ENCODE measurements at regions of chr6 and their contacts with region 1.

Region 1: DNA sequence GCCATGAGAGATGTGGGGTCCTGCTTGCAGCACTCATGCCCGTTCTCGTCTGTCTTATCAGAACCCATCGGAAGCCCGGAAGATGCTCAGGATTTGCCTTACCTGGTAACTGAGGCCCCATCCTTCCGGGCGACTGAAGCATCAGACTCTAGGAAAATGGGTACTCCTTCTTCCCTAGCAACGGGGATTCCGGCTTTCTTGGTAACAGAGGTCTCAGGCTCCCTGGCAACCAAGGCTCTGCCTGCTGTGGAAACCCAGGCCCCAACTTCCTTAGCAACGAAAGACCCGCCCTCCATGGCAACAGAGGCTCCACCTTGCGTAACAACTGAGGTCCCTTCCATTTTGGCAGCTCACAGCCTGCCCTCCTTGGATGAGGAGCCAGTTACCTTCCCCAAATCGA is 8.3 kb downstream of the PI16 start:
- DNase-seq: peak; percentile 66 to 95
- H3K4me3 ChIP-seq: no peak overlapping the region
- H3K27ac ChIP-seq: no peak overlapping the region
- H3K4me1 ChIP-seq: peaks cover 0 to 8% (median 5%) of the 10 kb centered on the region in 4 experiments; a peak in 5 of 7 replicates
- H3K27me3 ChIP-seq: no peaks in the 10 kb centered on the region
- CTCF ChIP-seq: no peak
- EP300 ChIP-seq: no peak
- POLR2A ChIP-seq: no peak
- RAD21 ChIP-seq: no peak; a peak in 1 of 4 replicates

Region 2: DNA sequence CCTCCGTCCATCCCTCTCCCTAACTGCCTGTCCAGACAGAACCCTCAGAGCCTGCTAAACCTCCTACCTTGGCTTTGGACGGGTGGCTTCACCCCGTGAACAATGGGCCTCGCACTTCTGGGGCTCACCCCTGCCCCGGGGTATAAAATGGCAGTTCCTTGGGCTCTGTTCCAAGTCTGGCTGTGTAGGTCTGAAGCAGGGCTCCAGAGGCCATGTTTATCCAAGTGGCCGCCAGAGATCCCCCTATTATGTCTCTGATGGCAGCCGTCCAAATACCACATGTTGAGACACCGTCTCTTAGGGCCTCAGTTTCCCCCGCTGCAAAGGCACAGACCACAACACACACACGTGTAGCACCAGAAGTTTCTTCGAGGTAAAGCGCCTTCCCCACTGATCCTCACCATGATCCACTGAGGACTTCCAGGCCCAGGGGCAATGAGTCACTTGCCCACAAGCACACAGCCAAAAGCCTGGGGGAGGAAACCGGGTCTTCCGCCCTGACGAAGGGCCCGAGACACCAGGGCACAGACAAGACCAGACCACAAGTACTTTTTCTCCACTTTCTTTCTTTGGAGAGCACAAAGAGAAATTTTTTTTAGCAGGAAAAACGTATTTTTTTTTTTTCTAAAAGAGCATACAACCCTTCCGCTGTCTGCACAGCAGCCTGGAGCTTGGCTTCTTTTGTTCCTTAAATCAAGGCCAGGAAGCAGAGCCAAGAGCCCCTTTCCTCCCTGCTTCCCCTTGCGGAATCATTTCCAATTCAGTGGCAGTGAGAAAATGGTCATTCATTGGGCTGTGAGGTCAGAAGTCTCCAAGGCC is 135.4 kb before region 1 on chr6:
- CTCF ChIA-PET with region 1: no interaction called
- POLR2A ChIA-PET with region 1: no interaction called
- DNase-seq: no peak
- H3K4me3 ChIP-seq: no peak overlapping the region
- H3K27ac ChIP-seq: no peak overlapping the region
- H3K4me1 ChIP-seq: no peaks in the 10 kb centered on the region; a peak in 1 of 7 replicates
- H3K27me3 ChIP-seq: no peaks in the 10 kb centered on the region; a peak in 1 of 7 replicates
- CTCF ChIP-seq: no peak
- EP300 ChIP-seq: no peak
- POLR2A ChIP-seq: no peak
- RAD21 ChIP-seq: no peak

Region 3: GRCh38 chr6:36977470-36977941 is 14.6 kb after region 1 on chr6:
- CTCF ChIA-PET with region 1: interaction called, 12 read pairs
- POLR2A ChIA-PET with region 1: interaction called, 7 read pairs
- DNase-seq: no peak
- H3K4me3 ChIP-seq: no peak overlapping the region
- H3K27ac ChIP-seq: no peak overlapping the region
- H3K4me1 ChIP-seq: peaks cover 6 to 14% (median 8%) of the 10 kb centered on the region in 4 experiments
- H3K27me3 ChIP-seq: no peaks in the 10 kb centered on the region
- CTCF ChIP-seq: peak; percentile 46 to 70 (median 47)
- EP300 ChIP-seq: no peak
- POLR2A ChIP-seq: no peak
- RAD21 ChIP-seq: peak; percentile 43 to 58

Region 4: GRCh38 chr6:37038292-37039198 is 75.7 kb after region 1 on chr6:
- CTCF ChIA-PET with region 1: no interaction called
- POLR2A ChIA-PET with region 1: no interaction called
- DNase-seq: no peak
- H3K4me3 ChIP-seq: no peak overlapping the region
- H3K27ac ChIP-seq: no peak overlapping the region
- H3K4me1 ChIP-seq: no peaks in the 10 kb centered on the region
- H3K27me3 ChIP-seq: no peaks in the 10 kb centered on the region
- CTCF ChIP-seq: no peak
- EP300 ChIP-seq: no peak
- POLR2A ChIP-seq: no peak
- RAD21 ChIP-seq: no peak